Naive thymus-derived CD8-positive, alpha-beta T cell (primary cell): ENCODE measurements at regions of chr22 and their contacts with region 1.

Region 1: DNA sequence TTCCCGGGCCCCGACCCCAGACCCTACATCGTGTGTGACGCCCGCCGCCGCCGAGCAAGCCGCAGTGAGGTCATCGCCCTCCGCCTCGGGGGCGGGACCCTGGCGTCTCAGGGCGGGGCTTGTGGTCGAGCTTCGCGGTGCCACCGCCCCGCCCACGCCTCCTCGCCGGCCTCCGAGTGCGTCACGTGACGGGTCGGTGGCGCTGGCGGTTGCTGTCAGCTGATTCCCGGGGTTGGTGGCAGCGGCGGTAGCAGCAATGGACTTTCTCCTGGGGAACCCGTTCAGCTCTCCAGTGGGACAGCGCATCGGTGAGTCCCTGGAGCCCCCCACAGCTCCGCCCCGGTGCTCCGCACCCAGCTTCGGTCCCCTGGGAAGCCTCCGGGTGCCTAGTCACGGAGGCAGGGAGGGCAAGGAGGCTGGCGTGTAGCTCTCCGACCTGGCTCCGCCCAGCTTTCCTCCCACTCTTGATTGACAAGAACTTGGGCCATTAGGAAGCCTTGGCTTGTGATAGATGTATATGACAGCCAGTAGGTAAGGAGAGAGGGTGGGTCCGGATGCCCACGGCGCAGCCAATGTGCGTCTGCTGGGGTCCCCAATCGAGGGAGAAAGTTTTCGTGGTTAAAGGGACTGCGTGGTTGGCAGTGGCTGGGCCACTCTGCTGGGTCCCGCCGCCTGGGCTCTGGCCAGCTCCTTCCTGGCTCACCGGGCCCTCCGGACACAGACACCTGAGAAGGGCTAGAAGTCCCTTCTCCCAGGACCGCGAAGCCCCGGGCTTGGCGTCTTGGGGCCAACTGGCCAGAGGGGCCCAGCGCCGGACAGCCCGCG is at the start of gene TOM1:
- DNase-seq: peak; percentile 94 to 100 (median 98)
- ATAC-seq: peak; percentile 89 to 92
- H3K4me3 Mint-ChIP-seq: peak within 1 kb of the TSS; percentile 89 to 98 (median 96)
- H3K27ac Mint-ChIP-seq: peak within 1 kb of the TSS; percentile 94 to 100 (median 98)
- H3K4me1 Mint-ChIP-seq: peaks cover 8 to 44% (median 34%) of the 10 kb centered on the region in 4 donors
- H3K27me3 Mint-ChIP-seq: no peaks in the 10 kb centered on the region
- polyA plus RNA-seq, gene TOM1: 26.6 to 29.6 (median 29.2) TPM

Region 2: DNA sequence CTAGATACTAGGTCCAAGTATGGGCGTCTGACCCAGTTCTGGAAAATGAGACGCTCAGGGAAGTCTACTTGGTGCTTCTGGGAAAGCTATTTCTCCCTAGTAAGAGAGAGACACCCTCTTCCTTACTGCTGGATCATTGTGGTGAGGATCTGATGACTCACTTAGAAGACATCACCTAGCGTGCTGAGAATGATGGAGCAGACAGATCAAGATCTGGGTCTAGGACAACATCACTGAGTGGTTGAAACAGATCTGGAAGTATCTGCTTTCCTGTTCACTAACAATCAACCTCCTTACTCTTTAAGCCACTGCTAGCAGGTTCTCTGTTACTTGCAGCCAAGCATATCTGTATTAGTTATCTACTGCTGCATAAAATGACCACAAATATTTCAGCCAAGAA is 80.9 kb before region 1 on chr22:
- POLR2A ChIA-PET with region 1: no interaction called
- DNase-seq: no peak
- ATAC-seq: no peak
- H3K4me3 Mint-ChIP-seq: no peak overlapping the region
- H3K27ac Mint-ChIP-seq: no peak overlapping the region
- H3K4me1 Mint-ChIP-seq: no peaks in the 10 kb centered on the region
- H3K27me3 Mint-ChIP-seq: peaks cover 5 to 21% (median 11%) of the 10 kb centered on the region in 5 donors

Region 3: DNA sequence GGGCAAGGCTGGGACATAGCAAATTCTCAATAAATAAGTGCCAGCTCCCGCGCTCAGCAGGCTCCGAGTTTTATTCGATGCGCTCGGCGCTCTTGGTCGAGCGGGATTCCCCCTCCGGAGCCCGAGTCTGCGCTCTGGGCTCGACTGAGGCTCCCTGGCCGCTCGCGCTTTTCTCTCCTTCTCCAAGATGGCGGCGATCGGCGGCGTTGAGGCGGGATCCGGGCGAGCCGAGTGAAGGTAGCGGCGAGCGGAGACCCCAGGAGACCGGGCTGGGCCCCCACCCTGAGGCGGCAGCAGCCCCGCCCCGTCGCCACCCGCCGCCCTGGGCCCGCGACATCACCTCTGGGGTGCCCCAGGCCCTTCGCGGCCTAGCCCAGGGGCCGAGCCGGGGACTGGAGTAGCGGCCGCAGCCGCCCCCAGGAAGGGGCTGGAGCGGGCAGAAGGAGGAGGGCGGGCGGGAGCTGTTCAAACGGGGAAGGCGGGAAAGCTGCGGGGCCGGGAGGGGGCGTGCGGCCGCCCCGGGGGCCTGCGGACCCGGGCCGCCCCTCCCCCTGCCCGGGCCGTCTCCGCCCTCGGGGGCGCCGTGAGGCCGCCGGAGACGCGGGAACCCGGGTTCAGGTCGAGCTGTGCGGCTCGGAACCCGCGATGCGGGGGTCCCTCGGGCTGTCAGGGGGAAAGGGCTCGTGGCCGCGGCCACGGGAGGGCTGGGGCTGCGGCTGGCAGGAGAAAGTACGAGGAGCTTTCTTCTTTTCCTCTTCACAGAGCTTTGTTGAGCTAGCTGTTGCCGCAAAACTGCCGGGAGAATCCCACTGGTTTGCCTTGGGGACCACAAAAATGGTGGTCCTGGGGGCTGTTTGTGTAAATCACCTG is 42.3 kb before region 1 on chr22 and contains the start of gene HMGXB4:
- POLR2A ChIA-PET with region 1: interaction called, 48 read pairs
- DNase-seq: peak; percentile 77 to 92 (median 85)
- ATAC-seq: peak; percentile 88 to 94
- H3K4me3 Mint-ChIP-seq: peak within 1 kb of the TSS; percentile 85 to 96 (median 92)
- H3K27ac Mint-ChIP-seq: peak within 1 kb of the TSS; percentile 88 to 98 (median 96)
- H3K4me1 Mint-ChIP-seq: peaks cover 13 to 26% (median 26%) of the 10 kb centered on the region in 4 donors
- H3K27me3 Mint-ChIP-seq: no peaks in the 10 kb centered on the region
- polyA plus RNA-seq, gene HMGXB4: 7.9 to 17.8 (median 11.0) TPM

Region 4: DNA sequence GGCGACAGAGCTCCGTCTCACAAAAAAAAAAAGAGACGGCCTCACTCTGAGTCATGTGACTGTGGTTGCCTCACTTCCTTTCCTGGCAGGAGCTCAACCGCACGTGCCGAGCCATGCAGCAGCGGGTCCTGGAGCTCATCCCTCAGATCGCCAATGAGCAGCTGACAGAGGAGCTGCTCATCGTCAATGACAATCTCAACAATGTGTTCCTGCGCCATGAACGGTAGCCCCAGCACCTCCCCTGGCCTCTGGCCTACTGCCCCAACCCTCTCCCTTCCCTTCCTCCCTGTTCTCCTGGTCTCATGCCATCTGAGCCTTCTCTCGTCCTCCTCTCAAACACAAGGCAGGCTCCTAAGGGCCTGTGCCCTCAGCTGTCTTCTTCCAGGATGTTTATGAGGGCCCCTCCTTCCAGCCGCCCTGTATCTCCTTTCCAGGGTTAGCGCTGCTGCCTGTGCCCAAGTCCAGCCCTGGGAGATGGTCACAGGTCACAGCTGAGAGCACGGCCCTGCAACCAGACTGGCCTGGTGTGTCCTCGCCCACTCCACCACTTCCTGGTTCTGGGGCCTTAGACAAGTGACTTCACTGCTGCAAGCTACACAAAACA is 30.5 kb after region 1 on chr22:
- POLR2A ChIA-PET with region 1: interaction called, 23 read pairs
- DNase-seq: peak in 8 of 10 donors; percentile 26 to 70 (median 37)
- ATAC-seq: peak; percentile 69 to 80
- H3K4me3 Mint-ChIP-seq: peak overlapping the region; percentile 40 to 81 (median 72)
- H3K27ac Mint-ChIP-seq: peak overlapping the region; percentile 81 to 95 (median 90)
- H3K4me1 Mint-ChIP-seq: peaks cover 8 to 35% (median 26%) of the 10 kb centered on the region in 4 donors
- H3K27me3 Mint-ChIP-seq: no peaks in the 10 kb centered on the region

Region 5: DNA sequence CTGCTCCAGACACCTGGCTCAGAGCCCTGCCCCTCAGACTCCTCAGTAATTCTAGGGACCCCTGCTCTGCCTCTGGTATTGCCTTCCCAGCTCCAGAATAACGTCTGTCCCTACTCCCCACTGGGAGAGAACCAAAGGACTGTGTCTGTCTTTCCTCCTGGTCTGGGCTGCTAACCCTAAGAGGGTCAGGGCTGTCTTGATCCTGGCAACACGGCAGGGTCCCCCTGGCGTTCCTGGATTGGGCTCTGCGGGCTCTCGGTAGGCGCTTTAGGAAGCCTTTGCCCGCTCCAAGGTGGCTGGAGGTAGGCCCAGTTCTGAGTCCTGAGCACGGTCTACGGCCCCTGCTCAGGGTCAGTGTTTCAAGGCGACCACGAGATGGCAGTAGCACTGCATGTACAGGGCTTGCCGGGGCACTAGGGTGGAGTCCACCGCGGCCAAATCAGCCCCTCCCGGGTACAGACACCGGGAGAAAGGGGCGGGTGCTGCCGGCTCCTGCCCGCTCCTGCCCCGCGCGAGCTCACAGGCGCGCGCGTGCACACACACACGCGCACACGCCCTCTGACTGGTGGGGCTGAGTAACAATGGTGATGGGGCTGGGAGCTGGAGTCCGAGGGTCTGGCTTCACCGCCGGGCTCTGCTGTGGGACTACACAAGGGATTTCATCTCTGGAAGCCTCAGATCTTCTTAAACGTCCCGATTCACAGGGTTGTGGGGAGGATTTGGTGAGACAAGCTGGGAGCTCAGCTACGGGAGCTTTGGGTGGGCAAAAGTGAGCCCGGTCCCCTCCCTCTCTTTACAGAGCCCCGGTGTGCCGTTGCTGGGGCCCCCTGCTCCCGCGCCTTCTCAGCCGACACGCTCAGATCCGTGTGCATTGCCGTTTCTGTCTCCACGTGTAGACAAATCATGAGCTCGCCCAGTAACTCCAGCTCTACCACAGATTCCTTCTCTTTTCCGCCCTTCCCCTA is 50.9 kb after region 1 on chr22:
- POLR2A ChIA-PET with region 1: no interaction called
- DNase-seq: peak; percentile 71 to 90 (median 80)
- ATAC-seq: peak; percentile 90 to 94
- H3K4me3 Mint-ChIP-seq: peak overlapping the region; percentile 68 to 91 (median 80)
- H3K27ac Mint-ChIP-seq: peak overlapping the region in 5 of 10 donors; percentile 21 to 90 (median 59)
- H3K4me1 Mint-ChIP-seq: peaks cover 14 to 31% (median 28%) of the 10 kb centered on the region in 4 donors
- H3K27me3 Mint-ChIP-seq: peaks cover 3 to 24% (median 10%) of the 10 kb centered on the region in 5 donors